CD14-positive monocyte (primary cell): ENCODE measurements at regions of chr15 and their contacts with region 1.

Region 1: GRCh38 chr15:69058830-69059556 is 44.5 kb downstream of the NOX5 start:
- DNase-seq: peak; percentile 62 to 72 (median 71)
- H3K4me3 ChIP-seq: no peak overlapping the region
- H3K4me3 Mint-ChIP-seq: peak overlapping the region; percentile 31 to 67
- H3K27ac ChIP-seq: no peak overlapping the region
- H3K27ac Mint-ChIP-seq: no peak overlapping the region
- H3K4me1 ChIP-seq: peaks cover 3 to 6% of the 10 kb centered on the region in 2 donors
- H3K4me1 Mint-ChIP-seq: peaks cover 6% of the 10 kb centered on the region
- H3K27me3 ChIP-seq: no peaks in the 10 kb centered on the region
- H3K27me3 Mint-ChIP-seq: peaks cover 0 to 6% (median 5%) of the 10 kb centered on the region in 3 donors
- CTCF ChIP-seq: peak; percentile 88

Region 2: GRCh38 chr15:69225355-69226025 is 166.5 kb after region 1 on chr15:
- intact Hi-C with region 1: loop called in 1 of 2 experiments (anchors 5 kb)
- DNase-seq: no peak
- H3K4me3 ChIP-seq: no peak overlapping the region
- H3K4me3 Mint-ChIP-seq: no peak overlapping the region
- H3K27ac ChIP-seq: no peak overlapping the region
- H3K27ac Mint-ChIP-seq: no peak overlapping the region
- H3K4me1 ChIP-seq: no peaks in the 10 kb centered on the region
- H3K4me1 Mint-ChIP-seq: peaks cover 7% of the 10 kb centered on the region
- H3K27me3 ChIP-seq: no peaks in the 10 kb centered on the region
- H3K27me3 Mint-ChIP-seq: no peaks in the 10 kb centered on the region
- CTCF ChIP-seq: peak; percentile 14

Region 3: DNA sequence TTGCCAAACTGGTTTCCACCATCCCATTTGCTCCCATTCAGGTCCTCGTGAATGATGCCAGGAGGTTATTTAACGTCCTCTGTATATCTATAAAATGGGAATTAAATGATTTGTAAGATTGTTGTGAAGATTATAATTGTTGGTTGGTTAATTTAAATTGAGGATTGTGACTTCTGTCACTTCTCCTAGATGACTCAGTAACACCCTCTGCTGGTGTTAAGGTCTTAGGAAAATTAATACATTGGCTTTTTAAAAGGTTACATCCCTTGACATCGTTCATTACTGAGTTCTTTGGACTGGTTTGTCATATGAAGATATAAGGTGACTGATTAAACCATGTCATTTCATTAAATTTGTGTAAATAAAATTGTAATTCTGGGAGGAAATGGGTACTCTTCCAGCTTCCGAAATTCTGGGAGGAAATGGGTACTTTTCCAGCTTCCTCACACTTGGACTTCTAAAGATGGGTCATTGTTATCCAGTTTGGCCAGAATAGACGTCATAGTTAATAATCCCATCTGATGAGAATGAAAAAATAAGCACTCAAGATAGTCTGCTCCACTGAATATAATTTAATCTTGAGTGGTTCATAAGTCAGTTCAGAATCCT is 206.5 kb after region 1 on chr15:
- intact Hi-C with region 1: loop called (anchors 2 to 10 kb)
- DNase-seq: peak in 1 of 3 donors; percentile 12
- H3K4me3 ChIP-seq: no peak overlapping the region
- H3K4me3 Mint-ChIP-seq: no peak overlapping the region
- H3K27ac ChIP-seq: no peak overlapping the region
- H3K27ac Mint-ChIP-seq: no peak overlapping the region
- H3K4me1 ChIP-seq: no peaks in the 10 kb centered on the region
- H3K4me1 Mint-ChIP-seq: peaks cover 7% of the 10 kb centered on the region
- H3K27me3 ChIP-seq: no peaks in the 10 kb centered on the region
- H3K27me3 Mint-ChIP-seq: no peaks in the 10 kb centered on the region
- CTCF ChIP-seq: peak; percentile 44

Region 4: GRCh38 chr15:69394556-69395282 is 335.7 kb after region 1 on chr15:
- intact Hi-C with region 1: loop called (anchors 2 to 5 kb)
- DNase-seq: peak; percentile 62 to 81 (median 78)
- H3K4me3 ChIP-seq: no peak overlapping the region
- H3K4me3 Mint-ChIP-seq: peak overlapping the region; percentile 42 to 70
- H3K27ac ChIP-seq: no peak overlapping the region
- H3K27ac Mint-ChIP-seq: no peak overlapping the region
- H3K4me1 ChIP-seq: peaks cover 0 to 4% of the 10 kb centered on the region in 2 donors
- H3K4me1 Mint-ChIP-seq: peaks cover 15% of the 10 kb centered on the region
- H3K27me3 ChIP-seq: no peaks in the 10 kb centered on the region
- H3K27me3 Mint-ChIP-seq: peaks cover 7 to 11% (median 9%) of the 10 kb centered on the region in 3 donors
- CTCF ChIP-seq: peak; percentile 95

Region 5: DNA sequence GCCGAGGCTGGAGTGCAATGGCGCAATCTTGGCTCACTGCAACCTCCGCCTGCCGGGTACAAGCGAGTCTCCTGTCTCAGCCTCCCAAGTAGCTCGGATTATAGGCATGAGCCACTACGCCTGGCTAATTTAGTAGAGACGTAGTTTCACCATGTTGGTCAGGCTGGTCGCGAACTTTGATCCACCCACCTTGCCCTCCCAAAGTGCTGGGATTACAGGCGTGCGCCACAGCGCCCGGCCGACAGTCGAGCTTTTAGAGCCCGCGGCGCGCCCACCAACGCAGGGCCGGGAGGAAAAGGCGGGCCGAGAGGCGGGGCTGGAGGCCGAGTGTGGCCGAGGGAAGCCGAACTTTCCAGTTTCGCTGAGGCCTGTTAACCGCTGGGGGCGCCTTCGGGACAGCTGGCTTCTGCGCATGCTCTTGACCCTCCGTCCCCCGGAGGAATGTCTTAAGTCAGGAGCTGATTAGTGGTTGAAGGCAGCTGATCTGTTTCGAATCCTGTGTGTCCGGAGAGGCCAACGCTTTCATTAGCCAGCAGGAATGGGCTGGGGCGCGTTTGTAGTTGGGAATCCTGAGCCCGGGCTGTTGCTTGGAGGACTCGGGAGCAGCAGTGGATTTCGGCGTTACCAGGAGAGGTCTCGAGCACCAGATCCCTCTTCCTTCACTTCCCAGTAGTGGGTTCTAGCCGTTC is 403.6 kb after region 1 on chr15:
- intact Hi-C with region 1: loop called in 1 of 2 experiments (anchors 10 kb)
- DNase-seq: peak; percentile 94 to 96 (median 94)
- H3K4me3 ChIP-seq: peak overlapping the region; percentile 57 to 91 (median 60)
- H3K4me3 Mint-ChIP-seq: peak overlapping the region; percentile 90 to 93
- H3K27ac ChIP-seq: peak overlapping the region; percentile 58 to 86
- H3K27ac Mint-ChIP-seq: peak overlapping the region; percentile 83 to 95 (median 92)
- H3K4me1 ChIP-seq: peaks cover 13 to 19% of the 10 kb centered on the region in 2 donors
- H3K4me1 Mint-ChIP-seq: peaks cover 16% of the 10 kb centered on the region
- H3K27me3 ChIP-seq: no peaks in the 10 kb centered on the region
- H3K27me3 Mint-ChIP-seq: peaks cover 0 to 7% (median 0%) of the 10 kb centered on the region in 3 donors
- CTCF ChIP-seq: peak; percentile 92